G401 (cell line): ENCODE measurements at regions of chr11 and their contacts with region 1.

Region 1: DNA sequence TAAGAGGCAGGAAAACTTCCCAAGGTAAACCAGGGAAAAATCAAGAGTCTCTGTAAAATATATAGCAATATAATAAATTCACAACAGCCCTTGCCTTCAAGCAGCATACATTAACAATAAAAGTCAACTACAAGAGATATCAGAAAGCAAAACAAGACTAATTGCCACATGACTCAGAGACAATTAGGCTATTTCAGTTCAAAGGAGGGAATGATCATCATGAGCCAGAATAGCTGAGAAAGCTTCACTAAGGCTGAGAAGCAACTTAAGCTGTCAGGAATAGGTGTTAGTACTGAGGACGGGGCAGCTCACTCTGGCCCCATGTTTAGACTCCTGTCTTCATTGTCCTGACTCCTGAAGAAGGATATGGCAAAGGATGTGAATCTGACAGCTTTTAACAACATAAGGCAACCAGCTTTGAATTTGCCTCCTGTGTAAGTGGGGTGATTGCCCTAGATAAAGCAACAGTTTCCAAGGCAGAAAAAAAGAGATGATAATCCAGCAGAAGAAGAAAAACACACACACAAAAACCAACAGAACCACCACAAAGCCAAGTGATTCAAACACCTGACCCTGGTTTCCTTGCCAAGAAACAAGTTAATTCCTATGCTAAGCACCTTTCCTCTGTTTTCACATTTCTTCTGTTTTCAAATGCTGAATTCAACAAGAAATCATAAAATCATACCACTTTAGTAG is 60.8 kb downstream of the SIK3 start:
- DNase-seq: peak; percentile 52

Region 2: GRCh38 chr11:116835791-116836631 is 201.4 kb before region 1 on chr11:
- in situ Hi-C with region 1: no loop called
- DNase-seq: peak; percentile 88

Region 3: DNA sequence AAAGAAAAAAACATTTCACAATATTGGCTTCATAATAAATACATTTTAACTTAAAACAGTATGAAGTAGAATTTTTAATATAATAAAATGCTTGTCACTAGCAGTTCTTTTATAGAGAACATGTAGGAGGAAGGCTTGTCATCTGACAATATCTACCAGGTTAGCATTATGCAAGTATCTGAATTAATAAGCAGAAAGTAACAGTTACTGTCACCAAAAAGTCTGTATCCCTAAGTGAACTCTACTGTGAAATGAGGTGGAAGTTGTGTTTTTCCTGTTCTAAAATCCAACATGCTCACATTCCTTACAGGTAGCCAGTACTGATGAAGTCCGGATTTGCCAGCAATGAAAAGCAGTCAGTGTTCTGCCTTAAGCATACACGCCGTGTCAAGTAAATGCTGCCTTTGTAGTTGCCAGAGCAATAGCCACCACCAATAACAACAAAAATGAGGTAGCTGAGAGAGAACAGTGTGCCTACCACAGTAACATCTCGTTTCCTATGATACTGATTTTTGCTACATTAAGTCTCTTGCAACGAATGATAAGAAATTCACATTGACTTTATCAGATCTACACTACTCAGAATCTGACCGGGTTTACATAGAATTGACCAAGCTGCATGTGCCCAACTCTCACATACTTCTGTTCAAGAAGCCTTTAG is 34.7 kb before region 1 on chr11:
- in situ Hi-C with region 1: loop called (anchors 5 kb)
- DNase-seq: peak; percentile 37

Region 4: GRCh38 chr11:117107701-117108590 is 70.5 kb after region 1 on chr11:
- in situ Hi-C with region 1: no loop called
- DNase-seq: no peak